GM13977 (cell line): ENCODE measurements at regions of chr4 and their contacts with region 1.

Region 1: GRCh38 chr4:52659722-52660261 is 691 bp upstream of the USP46 start:
- DNase-seq: peak; percentile 48
- CTCF ChIP-seq: no peak

Region 2: DNA sequence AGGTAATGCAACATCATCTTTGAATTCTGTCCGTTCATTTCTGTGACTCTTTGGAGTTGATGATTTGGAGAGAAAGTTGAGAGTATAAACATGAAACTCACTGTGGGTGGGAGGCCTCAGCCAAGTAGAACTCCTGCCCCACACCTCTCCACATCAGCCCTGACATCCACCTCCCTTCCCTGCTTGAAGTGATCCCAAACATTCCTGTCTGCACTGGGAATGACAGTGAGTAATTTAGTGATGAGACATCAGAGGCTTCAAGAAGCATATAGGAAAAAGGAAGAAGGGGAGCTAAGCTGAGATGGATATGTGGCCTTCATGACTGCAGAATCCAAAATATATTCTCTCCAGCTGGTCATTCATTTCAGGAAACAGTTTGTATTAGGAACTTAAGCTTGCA is 456.9 kb before region 1 on chr4:
- in situ Hi-C with region 1: no loop called
- DNase-seq: no peak
- CTCF ChIP-seq: no peak

Region 3: DNA sequence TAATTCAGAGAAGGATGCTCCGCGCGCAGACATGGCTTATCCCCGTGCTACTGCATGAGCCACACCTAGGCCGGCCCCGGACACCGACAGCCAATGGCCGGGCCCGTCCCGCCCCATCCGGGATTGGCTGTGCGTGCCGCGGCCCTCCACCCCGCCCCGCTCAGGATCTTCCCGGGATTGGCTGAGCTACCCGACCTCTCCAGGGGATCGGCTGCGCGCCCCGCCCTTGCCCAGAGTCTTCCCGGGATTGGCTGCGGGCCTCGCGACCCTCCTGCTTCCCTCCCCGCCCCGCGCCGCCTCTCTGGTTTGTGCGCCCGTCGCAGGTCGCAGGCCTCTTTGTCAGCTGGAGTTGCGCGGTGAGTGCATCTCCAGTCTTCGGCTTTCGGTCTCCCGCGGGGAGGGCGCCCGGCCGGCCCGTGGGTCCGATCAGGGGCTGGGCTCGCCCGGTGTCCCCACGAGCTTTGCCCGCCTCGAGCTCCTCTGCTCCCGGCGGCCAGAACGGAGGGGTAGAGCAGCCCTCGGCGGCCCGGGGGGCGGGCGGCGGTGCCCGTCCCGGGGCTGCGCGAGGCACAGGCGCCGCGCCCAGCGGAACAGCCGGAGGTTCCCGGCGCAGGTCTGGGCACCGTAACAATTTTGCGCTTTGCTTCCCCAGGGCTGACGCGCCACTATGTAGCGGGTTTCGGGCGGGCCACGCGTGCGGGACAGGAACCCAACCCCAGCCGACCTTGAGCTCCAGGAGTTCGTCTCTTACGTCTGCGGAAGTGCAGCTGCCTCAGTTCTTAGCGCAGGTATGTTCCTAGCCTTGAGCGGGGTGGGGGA is 52.6 kb after region 1 on chr4:
- in situ Hi-C with region 1: loop called (anchors 10 kb)
- DNase-seq: peak; percentile 96
- CTCF ChIP-seq: no peak